Activated CD4-positive, alpha-beta T cell treated with anti-CD3 and anti-CD28 coated beads, Interleukin-2, amount 10 ng/mL, durations not matched to agents 24 days and 14 days (primary cell): ENCODE measurements at regions of chr21 and their contacts with region 1.

Region 1: DNA sequence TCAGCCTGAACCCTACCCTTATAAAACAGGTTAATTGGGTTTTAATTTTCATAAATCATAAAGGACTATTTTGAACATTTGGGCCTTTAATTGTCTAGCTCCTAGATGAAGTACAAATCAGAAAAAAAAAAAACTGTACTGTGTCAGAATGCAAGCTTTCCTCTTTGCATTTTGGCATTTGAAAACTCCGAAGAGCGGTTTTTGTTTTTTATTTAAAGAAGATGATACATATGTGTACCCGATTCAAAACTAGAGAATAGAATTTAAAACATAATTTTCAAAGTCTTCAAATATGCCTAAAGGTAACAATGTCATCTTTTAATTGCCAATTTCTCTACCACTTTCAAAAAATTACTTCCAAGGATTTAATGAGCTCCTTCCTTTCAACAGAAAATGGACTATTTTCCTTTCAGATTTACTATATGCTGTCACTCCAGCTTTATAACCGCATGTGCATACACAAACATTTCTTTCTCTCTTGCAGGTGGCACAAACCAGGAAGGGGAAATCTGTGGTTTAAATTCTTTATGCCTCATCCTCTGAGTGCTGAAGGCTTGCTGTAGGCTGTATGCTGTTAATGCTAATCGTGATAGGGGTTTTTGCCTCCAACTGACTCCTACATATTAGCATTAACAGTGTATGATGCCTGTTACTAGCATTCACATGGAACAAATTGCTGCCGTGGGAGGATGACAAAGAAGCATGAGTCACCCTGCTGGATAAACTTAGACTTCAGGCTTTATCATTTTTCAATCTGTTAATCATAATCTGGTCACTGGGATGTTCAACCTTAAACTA is 33.7 kb downstream of the MRPL39 start:
- DNase-seq: peak; percentile 82
- H3K4me3 Mint-ChIP-seq: peak overlapping the region; percentile 82
- H3K27ac Mint-ChIP-seq: peak overlapping the region; percentile 96
- H3K4me1 Mint-ChIP-seq: peaks cover 69% of the 10 kb centered on the region
- H3K27me3 Mint-ChIP-seq: no peaks in the 10 kb centered on the region

Region 2: DNA sequence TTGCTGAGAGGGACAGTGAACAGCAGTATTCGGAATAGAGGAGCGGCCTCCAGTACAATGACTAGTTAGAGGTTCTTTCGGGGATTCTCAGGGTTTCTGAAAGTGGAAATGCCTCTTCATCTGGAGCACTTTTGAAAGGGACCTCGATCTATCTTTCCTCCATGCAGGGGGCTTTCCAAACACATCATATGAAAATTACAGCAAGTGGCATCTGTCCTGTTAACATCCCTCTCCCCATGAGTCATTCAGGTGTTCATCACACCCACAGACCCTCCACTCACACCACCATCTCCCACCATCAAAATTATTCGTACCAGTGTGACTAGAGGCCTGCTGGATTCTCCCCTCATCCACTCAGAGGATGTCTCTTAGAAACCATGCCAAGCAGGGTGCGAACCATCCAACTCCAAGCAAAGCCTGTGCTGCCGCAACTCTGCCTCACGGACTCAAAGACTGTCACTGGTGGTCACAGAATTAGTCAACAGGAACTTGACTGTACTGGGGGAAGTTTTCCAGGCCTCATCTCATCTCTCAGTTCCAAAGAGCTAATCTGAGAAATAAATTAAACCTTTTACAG is 177.4 kb before region 1 on chr21:
- intact Hi-C with region 1: loop called (anchors 1 kb)
- DNase-seq: peak; percentile 84
- H3K4me3 Mint-ChIP-seq: peak overlapping the region; percentile 49
- H3K27ac Mint-ChIP-seq: peak overlapping the region; percentile 86
- H3K4me1 Mint-ChIP-seq: peaks cover 23% of the 10 kb centered on the region
- H3K27me3 Mint-ChIP-seq: peaks cover 2% of the 10 kb centered on the region

Region 3: DNA sequence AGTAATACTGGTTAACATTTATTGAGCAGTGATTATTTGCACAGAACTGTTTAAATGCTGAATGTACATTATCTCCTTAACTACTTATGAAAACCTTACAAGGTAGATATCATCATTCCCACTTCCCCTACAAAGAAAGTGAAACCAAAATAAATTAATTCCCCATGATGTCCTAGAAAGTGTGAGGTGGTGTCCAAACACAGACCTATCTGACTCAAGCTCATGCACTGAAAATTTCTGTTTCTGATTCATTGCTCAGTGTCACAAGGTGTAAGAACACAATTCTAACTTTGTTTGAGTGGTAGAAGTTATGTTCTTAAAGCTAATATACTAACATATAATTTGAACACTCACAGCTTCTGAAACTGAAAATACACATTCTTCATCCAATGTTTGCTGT is 145.1 kb before region 1 on chr21:
- intact Hi-C with region 1: loop called (anchors 1 kb)
- DNase-seq: no peak
- H3K4me3 Mint-ChIP-seq: peak overlapping the region; percentile 42
- H3K27ac Mint-ChIP-seq: peak overlapping the region; percentile 57
- H3K4me1 Mint-ChIP-seq: peaks cover 36% of the 10 kb centered on the region
- H3K27me3 Mint-ChIP-seq: no peaks in the 10 kb centered on the region

Region 4: GRCh38 chr21:25464275-25464674 is 109.3 kb before region 1 on chr21:
- intact Hi-C with region 1: loop called (anchors 1 kb)
- DNase-seq: peak; percentile 73
- H3K4me3 Mint-ChIP-seq: peak overlapping the region; percentile 69
- H3K27ac Mint-ChIP-seq: peak overlapping the region; percentile 98
- H3K4me1 Mint-ChIP-seq: peaks cover 48% of the 10 kb centered on the region
- H3K27me3 Mint-ChIP-seq: no peaks in the 10 kb centered on the region

Region 5: DNA sequence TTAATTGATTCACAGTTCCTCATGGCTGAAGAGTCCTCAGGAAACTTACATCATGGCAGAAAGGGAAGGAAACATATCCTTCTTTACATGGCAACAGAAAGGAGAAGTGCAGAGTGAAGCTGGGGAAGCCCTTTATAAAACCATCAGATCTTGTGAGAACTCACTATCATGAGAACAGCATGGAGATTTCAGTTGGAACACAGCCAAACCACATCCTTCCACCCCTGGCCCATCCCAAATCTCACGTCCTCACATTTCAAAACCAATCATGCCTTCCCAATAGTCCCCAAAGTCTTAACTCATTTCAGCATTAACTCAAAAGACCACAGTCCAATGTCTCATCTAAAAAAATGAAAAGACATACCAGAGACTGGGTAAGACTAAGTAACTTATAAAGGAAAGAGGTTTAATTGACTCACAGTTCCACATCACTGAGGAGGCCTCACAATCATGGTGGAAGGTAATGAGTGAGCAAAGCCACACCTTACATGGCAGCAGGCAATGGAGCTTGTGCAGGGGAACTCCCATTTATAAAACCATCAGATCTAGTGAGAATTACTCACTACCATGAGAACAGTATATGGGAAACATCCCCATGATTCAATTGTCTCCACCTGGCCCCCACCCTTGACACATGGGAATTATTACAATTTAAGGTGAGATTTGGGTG is 71.5 kb before region 1 on chr21:
- intact Hi-C with region 1: loop called (anchors 1 kb)
- DNase-seq: peak; percentile 67
- H3K4me3 Mint-ChIP-seq: peak overlapping the region; percentile 52
- H3K27ac Mint-ChIP-seq: peak overlapping the region; percentile 96
- H3K4me1 Mint-ChIP-seq: peaks cover 39% of the 10 kb centered on the region
- H3K27me3 Mint-ChIP-seq: no peaks in the 10 kb centered on the region

Region 6: DNA sequence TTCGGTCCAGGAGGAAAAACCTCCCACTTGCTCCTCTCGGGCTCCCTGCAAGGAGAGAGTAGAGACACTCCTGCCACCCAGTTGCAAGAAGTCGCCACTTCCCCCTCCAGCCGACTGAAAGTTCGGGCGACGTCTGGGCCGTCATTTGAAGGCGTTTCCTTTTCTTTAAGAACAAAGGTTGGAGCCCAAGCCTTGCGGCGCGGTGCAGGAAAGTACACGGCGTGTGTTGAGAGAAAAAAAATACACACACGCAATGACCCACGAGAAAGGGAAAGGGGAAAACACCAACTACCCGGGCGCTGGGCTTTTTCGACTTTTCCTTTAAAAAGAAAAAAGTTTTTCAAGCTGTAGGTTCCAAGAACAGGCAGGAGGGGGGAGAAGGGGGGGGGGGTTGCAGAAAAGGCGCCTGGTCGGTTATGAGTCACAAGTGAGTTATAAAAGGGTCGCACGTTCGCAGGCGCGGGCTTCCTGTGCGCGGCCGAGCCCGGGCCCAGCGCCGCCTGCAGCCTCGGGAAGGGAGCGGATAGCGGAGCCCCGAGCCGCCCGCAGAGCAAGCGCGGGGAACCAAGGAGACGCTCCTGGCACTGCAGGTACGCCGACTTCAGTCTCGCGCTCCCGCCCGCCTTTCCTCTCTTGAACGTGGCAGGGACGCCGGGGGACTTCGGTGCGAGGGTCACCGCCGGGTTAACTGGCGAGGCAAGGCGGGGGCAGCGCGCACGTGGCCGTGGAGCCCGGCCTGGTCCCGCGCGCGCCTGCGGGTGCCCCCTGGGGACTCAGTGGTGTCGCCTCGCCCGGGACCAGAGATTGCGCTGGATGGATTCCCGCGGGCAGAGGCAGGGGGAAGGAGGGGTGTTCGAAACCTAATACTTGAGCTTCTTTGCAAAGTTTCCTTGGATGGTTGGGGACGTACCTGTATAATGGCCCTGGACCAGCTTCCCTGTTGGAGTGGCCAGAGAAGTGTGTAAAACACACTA is 11.7 kb before region 1 on chr21:
- intact Hi-C with region 1: loop called (anchors 1 kb)
- DNase-seq: peak; percentile 92
- H3K4me3 Mint-ChIP-seq: peak overlapping the region; percentile 90
- H3K27ac Mint-ChIP-seq: peak overlapping the region; percentile 99
- H3K4me1 Mint-ChIP-seq: peaks cover 54% of the 10 kb centered on the region
- H3K27me3 Mint-ChIP-seq: peaks cover 2% of the 10 kb centered on the region